Motor neuron (in vitro differentiated cells): ENCODE measurements at regions of chr7 and their contacts with region 1.

Region 1: DNA sequence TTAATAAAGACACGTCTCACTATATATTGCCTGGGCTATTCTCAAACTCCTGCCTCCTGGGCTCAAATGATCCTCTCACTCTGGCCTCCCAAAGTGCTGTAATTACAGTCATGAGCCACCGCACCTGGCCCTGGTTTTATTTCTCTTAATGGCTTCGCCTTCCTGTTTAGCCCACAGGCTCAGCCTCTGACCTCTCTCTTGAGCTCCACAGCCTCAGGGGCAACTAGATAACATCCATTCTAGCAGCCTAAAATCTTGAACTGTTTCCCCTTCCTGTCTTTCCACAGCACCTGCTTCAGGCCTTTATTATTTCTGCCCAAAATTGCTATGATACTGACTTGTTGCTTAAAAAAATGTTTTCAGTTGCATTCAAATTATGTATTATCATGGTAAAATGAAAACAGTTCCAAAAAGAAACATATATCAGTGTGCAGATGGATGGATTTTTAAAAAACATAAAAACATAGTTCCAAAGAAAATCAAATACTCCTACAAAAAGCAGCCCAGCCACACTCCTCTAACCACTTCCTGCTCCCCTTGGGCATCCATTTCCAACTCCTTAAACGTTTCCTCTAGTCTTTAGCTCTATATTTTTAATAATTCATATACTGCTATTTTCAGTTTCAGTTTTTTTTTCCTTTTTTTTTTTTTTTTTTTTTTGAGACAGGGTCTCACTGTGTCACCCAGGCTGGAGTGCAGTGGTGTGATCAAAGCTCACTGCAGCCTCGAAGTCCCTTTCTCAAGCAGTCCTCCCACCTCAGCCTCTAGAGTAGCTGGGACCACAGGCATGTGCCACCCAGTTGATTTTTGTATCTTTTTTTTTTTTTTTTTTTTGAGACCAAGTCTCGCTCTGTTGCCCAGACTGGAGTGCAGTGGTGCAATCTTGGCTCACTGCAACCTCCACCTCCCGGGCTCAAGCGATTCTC is 5.1 kb upstream of the BAZ1B start:
- ATAC-seq: peak in 4 of 8 experiments; percentile 2 to 13 (median 4)
- H3K4me3 ChIP-seq: no peak overlapping the region
- H3K27ac ChIP-seq: no peak overlapping the region
- H3K4me1 ChIP-seq: peaks cover 0 to 7% of the 10 kb centered on the region in 2 donors

Region 2: GRCh38 chr7:73647725-73648592 is 120.8 kb after region 1 on chr7:
- in situ Hi-C with region 1: loop called in 1 of 9 experiments (anchors 25 kb)
- ATAC-seq: peak; percentile 74 to 93 (median 90)
- H3K4me3 ChIP-seq: peak overlapping the region; percentile 22 to 34 (median 28)
- H3K27ac ChIP-seq: no peak overlapping the region
- H3K4me1 ChIP-seq: peaks cover 0 to 5% of the 10 kb centered on the region in 2 donors